Psoas muscle (tissue), 8 donors: ENCODE measurements at regions of chr13 and their contacts with region 1.

Region 1: GRCh38 chr13:39317291-39317690 is 279.0 kb downstream of the NHLRC3 start:
- DNase-seq: peak; percentile 47 to 64
- ATAC-seq: peak in 3 of 4 donors; percentile 62 to 70 (median 64)
- H3K4me3 ChIP-seq: no peak overlapping the region
- H3K27ac ChIP-seq: no peak overlapping the region
- H3K4me1 ChIP-seq: no peaks in the 10 kb centered on the region
- H3K27me3 ChIP-seq: no peaks in the 10 kb centered on the region
- CTCF ChIP-seq: no peak

Region 2: GRCh38 chr13:37869756-37870488 is 1447.4 kb before region 1 on chr13 and contains the start of gene TRPC4:
- intact Hi-C with region 1: loop called in 1 of 2 experiments (anchors 10 kb)
- DNase-seq: peak; percentile 19 to 49
- ATAC-seq: no peak
- H3K4me3 ChIP-seq: peak within 1 kb of the TSS; percentile 58
- H3K27ac ChIP-seq: no peak within 1 kb of the TSS
- H3K4me1 ChIP-seq: peaks cover 4% of the 10 kb centered on the region
- H3K27me3 ChIP-seq: peaks cover 0 to 34% (median 13%) of the 10 kb centered on the region in 3 donors
- CTCF ChIP-seq: no peak
- total RNA-seq, gene TRPC4: 0.06 to 0.59 (median 0.18) TPM